Left cardiac atrium (tissue), 4 donors: ENCODE measurements at regions of chr22 and their contacts with region 1.

Region 1: GRCh38 chr22:35678836-35679235 is 30.6 kb downstream of the APOL6 start:
- DNase-seq: no peak
- ATAC-seq: no peak

Region 2: GRCh38 chr22:35611891-35612576 is 66.8 kb before region 1 on chr22:
- intact Hi-C with region 1: loop called in 1 of 2 experiments (anchors 10 kb)
- DNase-seq: no peak
- ATAC-seq: peak in 1 of 2 donors; percentile 24